ENCODE measurements at regions of chr20 and their contacts with region 1.

Region 1: GRCh38 chr20:60013296-60014139 is 55.3 kb downstream of the CDH26 start:
- DNase-seq: no peak
- H3K4me3 Mint-ChIP-seq: no peak overlapping the region
- H3K27ac Mint-ChIP-seq: no peak overlapping the region
- H3K4me1 Mint-ChIP-seq: no peaks in the 10 kb centered on the region
- H3K27me3 Mint-ChIP-seq: no peaks in the 10 kb centered on the region
- CTCF ChIP-seq: no peak

Region 2: DNA sequence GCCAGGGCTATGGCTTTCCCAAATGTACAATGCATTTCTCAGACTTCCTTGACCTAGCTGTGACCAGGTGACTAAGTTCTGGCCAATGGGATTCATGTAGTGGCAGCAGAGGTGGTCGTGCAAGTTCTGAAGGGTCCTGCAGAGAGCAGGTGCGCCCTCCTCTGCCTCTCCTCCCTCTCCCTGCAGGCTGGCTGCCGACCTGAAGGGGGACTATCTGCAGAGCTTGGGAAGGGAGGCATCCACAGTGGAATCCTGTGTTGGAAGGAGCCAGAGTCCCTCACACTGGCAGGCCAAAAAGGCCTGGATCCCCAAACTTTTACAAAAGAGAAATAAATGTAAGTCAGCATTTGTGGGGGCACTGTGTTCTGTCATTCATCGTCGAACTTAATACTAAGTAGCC is 11.3 kb after region 1 on chr20:
- CTCF ChIA-PET with region 1: interaction called, 12 read pairs
- POLR2A ChIA-PET with region 1: interaction called, 3 read pairs
- intact Hi-C with region 1: no loop called
- DNase-seq: no peak
- H3K4me3 Mint-ChIP-seq: no peak overlapping the region
- H3K27ac Mint-ChIP-seq: no peak overlapping the region
- H3K4me1 Mint-ChIP-seq: no peaks in the 10 kb centered on the region
- H3K27me3 Mint-ChIP-seq: no peaks in the 10 kb centered on the region
- CTCF ChIP-seq: no peak

Region 3: DNA sequence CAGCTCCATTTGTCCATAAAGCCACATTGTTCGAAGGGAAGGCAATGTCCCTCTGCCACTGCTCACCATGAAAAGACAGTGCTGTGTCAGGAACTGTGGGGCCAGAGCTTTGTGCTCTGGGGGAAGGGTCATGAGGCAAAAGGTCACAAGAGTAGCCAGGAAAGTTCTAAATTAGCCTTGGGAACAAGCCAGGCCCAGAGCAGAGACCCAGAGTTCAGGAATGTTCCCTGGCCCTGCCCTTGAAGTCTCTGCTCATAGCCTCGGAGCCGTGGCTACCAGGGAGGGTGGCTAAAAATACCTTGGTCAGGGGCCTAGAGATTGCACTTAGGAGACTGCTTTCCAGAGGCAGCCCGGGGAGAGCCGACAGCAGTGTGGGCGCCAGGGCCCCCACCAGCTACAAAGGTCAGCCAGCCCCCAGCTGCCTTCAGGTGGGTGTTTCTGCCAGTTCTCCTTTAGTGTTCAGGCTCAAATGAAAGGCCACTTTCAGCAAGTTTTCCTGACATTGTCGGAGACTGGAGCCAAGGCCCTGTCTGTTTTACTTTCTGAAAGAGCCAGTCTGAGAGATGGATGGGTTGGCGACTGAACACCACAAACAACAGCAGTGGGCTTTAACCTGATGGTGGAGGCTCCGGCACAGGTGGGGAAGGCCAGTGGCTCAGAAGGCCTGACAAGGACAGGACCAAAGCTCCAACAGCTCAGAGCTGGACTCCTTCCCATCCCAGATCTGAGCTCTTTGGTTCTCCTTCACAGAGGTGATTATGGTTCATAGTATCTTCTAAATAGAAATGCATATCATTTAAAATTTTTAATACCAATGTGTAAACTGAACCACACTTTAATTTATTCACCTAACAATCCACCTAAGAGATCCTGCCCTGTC is 21.0 kb after region 1 on chr20:
- CTCF ChIA-PET with region 1: no interaction called
- POLR2A ChIA-PET with region 1: no interaction called
- intact Hi-C with region 1: loop called (anchors 1 kb)
- DNase-seq: no peak
- H3K4me3 Mint-ChIP-seq: no peak overlapping the region
- H3K27ac Mint-ChIP-seq: no peak overlapping the region
- H3K4me1 Mint-ChIP-seq: no peaks in the 10 kb centered on the region
- H3K27me3 Mint-ChIP-seq: no peaks in the 10 kb centered on the region
- CTCF ChIP-seq: no peak

Region 4: DNA sequence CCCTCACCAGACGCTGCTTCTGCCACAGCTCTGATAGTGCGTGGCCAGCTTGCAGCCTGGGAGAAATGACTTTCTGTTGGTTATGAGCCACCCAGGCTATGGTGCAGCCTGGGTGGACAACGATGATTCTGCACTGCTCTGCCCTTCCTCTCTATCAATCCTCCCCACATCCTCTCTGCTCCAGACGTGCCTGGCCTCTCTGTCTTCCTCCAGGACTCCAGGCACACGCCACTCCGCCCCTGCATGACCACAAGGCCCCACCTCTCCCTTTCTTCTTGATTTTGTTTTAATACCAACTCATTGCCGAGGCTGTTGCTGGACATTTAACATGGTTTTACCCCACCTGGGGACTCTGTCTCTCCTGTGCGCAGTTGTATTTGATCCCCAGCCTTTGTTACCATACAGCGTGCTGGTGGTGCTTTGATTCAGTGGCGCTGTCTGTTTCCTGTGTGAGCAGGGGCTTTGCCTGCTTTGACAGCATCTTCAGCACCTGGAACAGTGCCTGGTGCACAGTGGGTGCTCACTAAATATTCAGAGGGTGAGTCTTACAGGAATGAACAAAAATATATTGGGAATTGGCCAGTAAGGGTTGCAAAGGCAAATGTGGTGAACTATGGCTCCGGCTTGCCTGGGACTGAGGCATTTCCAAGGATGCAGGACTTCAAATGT is 225.6 kb after region 1 on chr20:
- CTCF ChIA-PET with region 1: no interaction called
- POLR2A ChIA-PET with region 1: no interaction called
- intact Hi-C with region 1: no loop called
- DNase-seq: no peak
- H3K4me3 Mint-ChIP-seq: no peak overlapping the region
- H3K27ac Mint-ChIP-seq: no peak overlapping the region
- H3K4me1 Mint-ChIP-seq: no peaks in the 10 kb centered on the region
- H3K27me3 Mint-ChIP-seq: peaks cover 33% of the 10 kb centered on the region
- CTCF ChIP-seq: no peak